ENCODE measurements at regions of chr4 and their contacts with region 1.

Region 1: GRCh38 chr4:113355550-113356371 is 306.3 kb downstream of the ANK2 start:
- DNase-seq: peak; percentile 95
- H3K4me3 ChIP-seq: no peak overlapping the region
- H3K27ac ChIP-seq: peak overlapping the region; percentile 81
- H3K4me1 ChIP-seq: peaks cover 17% of the 10 kb centered on the region
- H3K27me3 ChIP-seq: peaks cover 25% of the 10 kb centered on the region
- CTCF ChIP-seq: peak; percentile 12 to 44

Region 2: GRCh38 chr4:111992351-111993168 is 1363.2 kb before region 1 on chr4:
- CTCF ChIA-PET with region 1: no interaction called
- dilution Hi-C with region 1: no loop called
- in situ Hi-C with region 1: no loop called
- intact Hi-C with region 1: no loop called
- DNase-seq: no peak
- H3K4me3 ChIP-seq: no peak overlapping the region
- H3K27ac ChIP-seq: no peak overlapping the region
- H3K4me1 ChIP-seq: peaks cover 11% of the 10 kb centered on the region
- H3K27me3 ChIP-seq: peaks cover 7% of the 10 kb centered on the region
- CTCF ChIP-seq: no peak

Region 3: DNA sequence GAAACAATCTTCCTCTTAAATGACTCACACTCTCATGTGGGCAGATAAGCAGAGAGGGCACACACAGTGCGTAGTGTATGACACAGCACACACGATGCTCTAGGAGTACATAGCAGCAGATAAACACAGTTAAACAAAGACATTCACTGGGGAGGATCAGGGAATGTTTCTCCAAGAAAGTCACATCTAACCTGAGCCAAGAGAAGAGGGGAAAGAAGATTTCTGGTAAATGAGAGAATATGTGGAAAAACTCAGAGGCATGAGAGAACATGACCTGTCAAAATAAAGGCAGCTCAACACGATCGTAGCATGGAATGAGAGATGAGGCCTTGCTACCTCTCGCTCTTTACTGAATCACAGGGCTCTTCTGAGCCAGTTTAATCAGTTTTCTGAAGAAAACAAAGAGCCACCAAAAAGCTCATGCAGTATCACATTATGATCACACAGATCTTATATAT is 55.3 kb before region 1 on chr4:
- CTCF ChIA-PET with region 1: no interaction called
- dilution Hi-C with region 1: loop called (anchors 5 kb)
- in situ Hi-C with region 1: no loop called
- intact Hi-C with region 1: no loop called
- DNase-seq: peak; percentile 92
- H3K4me3 ChIP-seq: no peak overlapping the region
- H3K27ac ChIP-seq: peak overlapping the region; percentile 92
- H3K4me1 ChIP-seq: peaks cover 7% of the 10 kb centered on the region
- H3K27me3 ChIP-seq: no peaks in the 10 kb centered on the region
- CTCF ChIP-seq: no peak